ENCODE measurements at regions of chr10 and their contacts with region 1.

Region 1: GRCh38 chr10:17023386-17024298 is 106.0 kb downstream of the CUBN start:
- DNase-seq: peak; percentile 89
- ATAC-seq: peak; percentile 66
- H3K4me3 Mint-ChIP-seq: peak overlapping the region; percentile 50
- H3K27ac Mint-ChIP-seq: peak overlapping the region; percentile 95
- H3K4me1 Mint-ChIP-seq: peaks cover 62% of the 10 kb centered on the region
- H3K27me3 Mint-ChIP-seq: no peaks in the 10 kb centered on the region

Region 2: GRCh38 chr10:16891375-16892313 is 132.0 kb before region 1 on chr10:
- CTCF ChIA-PET with region 1: no interaction called
- POLR2A ChIA-PET with region 1: interaction called, 9 read pairs
- intact Hi-C with region 1: loop called in 1 of 2 experiments (anchors 1 kb)
- DNase-seq: peak; percentile 72
- ATAC-seq: peak; percentile 96
- H3K4me3 Mint-ChIP-seq: peak overlapping the region; percentile 56
- H3K27ac Mint-ChIP-seq: peak overlapping the region; percentile 48
- H3K4me1 Mint-ChIP-seq: peaks cover 13% of the 10 kb centered on the region
- H3K27me3 Mint-ChIP-seq: no peaks in the 10 kb centered on the region

Region 3: DNA sequence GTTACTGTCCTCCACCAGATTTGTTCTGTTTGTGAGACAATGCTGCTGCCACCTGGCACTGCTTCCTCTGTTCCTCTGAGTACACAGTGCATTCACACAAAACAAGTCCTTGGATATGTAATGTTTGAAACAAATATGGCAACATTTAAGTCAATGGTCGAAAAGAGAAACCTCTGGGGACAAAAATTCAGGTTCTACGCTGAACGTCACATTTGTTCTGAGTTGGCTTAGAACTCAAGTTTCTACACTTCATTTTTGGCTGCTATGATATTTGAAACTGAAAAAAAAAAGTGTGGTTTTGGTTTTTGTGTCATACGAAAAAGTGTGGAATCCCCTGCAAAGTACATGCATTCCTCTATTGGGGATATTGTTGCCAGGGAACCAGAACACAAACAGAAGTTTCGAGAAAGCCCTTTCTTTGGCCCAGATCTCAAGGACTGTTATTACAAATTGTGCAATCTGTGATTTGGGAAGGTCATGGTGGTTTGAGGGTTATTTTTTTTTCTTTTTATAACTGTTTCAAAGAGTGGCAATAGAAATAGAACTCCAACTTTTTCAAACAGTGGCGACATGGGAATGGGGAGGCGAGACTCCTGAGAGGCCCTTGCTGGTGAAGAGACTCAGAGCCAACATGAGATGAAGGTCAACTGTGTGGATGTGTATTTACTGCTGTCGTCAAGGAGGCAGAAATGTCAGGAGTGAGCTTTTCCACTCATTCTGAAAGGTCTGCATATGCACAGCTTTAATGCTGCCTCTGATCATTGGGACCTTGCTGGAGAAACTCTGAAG is 21.5 kb before region 1 on chr10:
- CTCF ChIA-PET with region 1: interaction called, 15 read pairs
- POLR2A ChIA-PET with region 1: interaction called, 13 read pairs
- intact Hi-C with region 1: loop called (anchors 1 kb)
- DNase-seq: peak; percentile 34
- ATAC-seq: peak; percentile 62
- H3K4me3 Mint-ChIP-seq: peak overlapping the region; percentile 24
- H3K27ac Mint-ChIP-seq: peak overlapping the region; percentile 91
- H3K4me1 Mint-ChIP-seq: peaks cover 64% of the 10 kb centered on the region
- H3K27me3 Mint-ChIP-seq: peaks cover 12% of the 10 kb centered on the region

Region 4: DNA sequence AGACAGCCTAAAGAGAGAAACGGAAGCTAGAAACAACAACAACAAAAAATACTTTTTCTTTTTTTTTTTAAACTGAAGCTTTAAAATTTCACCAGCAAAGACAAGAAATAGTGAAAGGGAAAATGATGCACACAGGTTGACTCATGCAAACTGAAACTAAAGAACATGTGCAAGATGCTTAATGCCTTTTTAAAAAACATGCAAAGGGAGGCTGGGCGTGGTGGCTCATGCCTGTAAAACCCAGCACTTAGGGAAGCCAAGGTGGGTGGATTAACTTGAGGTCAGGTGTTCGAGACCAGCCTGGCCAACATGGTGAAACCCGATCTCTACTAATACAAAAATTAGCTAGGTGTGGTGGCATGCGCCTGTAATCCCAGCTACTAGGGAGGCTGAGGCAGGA is 121.1 kb after region 1 on chr10:
- CTCF ChIA-PET with region 1: no interaction called
- POLR2A ChIA-PET with region 1: no interaction called
- intact Hi-C with region 1: loop called (anchors 1 kb)
- DNase-seq: peak; percentile 80
- ATAC-seq: peak; percentile 96
- H3K4me3 Mint-ChIP-seq: no peak overlapping the region
- H3K27ac Mint-ChIP-seq: peak overlapping the region; percentile 51
- H3K4me1 Mint-ChIP-seq: peaks cover 31% of the 10 kb centered on the region
- H3K27me3 Mint-ChIP-seq: no peaks in the 10 kb centered on the region

Region 5: GRCh38 chr10:17216217-17216900 is 192.7 kb after region 1 on chr10:
- CTCF ChIA-PET with region 1: no interaction called
- POLR2A ChIA-PET with region 1: no interaction called
- intact Hi-C with region 1: loop called in 1 of 2 experiments (anchors 1 kb)
- DNase-seq: peak; percentile 48
- ATAC-seq: peak; percentile 96
- H3K4me3 Mint-ChIP-seq: no peak overlapping the region
- H3K27ac Mint-ChIP-seq: peak overlapping the region; percentile 85
- H3K4me1 Mint-ChIP-seq: peaks cover 39% of the 10 kb centered on the region
- H3K27me3 Mint-ChIP-seq: no peaks in the 10 kb centered on the region